ENCODE measurements at regions of chr9 and their contacts with region 1.

Region 1: GRCh38 chr9:68999393-69000105 is 14.4 kb downstream of the PRKACG start:
- DNase-seq: peak; percentile 64 to 67
- ATAC-seq: peak; percentile 96

Region 2: GRCh38 chr9:68584189-68585033 is 415.1 kb before region 1 on chr9:
- intact Hi-C with region 1: loop called in 1 of 2 experiments (anchors 5 kb)
- DNase-seq: peak; percentile 83 to 88
- ATAC-seq: peak; percentile 98

Region 3: GRCh38 chr9:68704814-68705530 is 294.6 kb before region 1 on chr9 and contains the start of gene PIP5K1B:
- intact Hi-C with region 1: loop called in 1 of 2 experiments (anchors 5 kb)
- DNase-seq: peak; percentile 87 to 91
- ATAC-seq: peak; percentile 82
- total RNA-seq, gene PIP5K1B: 83.1 to 91.6 TPM

Region 4: DNA sequence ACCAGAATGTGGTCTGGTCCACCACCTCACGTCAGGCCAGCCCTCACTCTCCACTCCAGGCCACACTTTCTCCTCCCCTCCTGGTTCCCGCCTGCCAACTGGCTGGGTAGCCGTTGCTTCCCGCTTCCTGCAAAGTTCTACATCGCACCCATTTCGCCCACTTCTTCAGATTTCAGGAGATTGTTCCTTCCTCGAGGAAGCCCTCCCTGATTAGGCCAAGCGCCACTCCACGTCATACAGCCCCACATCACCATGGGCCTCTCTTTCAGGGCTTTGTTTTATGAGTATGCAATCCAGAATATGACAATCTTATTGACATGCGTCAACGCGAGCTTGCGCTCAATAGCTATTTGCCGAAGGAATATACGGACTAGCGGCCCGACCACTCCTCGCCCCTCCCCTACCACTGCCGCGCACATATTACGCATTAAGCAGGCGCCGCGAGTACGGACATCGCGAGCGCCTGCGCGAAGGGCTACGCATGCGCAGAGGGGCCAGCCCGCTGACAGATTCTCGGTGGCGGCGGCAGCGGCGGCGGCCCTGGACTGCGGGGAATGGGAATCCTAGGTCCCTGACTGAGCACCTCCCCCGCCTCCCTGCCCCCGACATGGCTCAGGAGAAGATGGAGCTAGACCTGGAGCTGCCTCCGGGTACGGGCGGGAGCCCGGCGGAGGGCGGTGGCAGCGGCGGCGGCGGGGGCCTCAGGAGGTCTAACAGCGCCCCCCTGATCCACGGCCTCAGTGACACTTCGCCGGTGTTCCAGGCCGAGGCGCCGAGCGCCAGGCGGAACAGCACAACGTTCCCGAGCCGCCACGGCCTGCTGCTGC is 219.8 kb before region 1 on chr9:
- intact Hi-C with region 1: loop called in 1 of 2 experiments (anchors 10 kb)
- DNase-seq: peak; percentile 92 to 97
- ATAC-seq: peak; percentile 90

Region 5: GRCh38 chr9:68851657-68852056 is 147.9 kb before region 1 on chr9:
- intact Hi-C with region 1: loop called in 1 of 2 experiments (anchors 10 kb)
- DNase-seq: no peak
- ATAC-seq: no peak

Region 6: GRCh38 chr9:69056191-69056815 is 56.8 kb after region 1 on chr9:
- intact Hi-C with region 1: no loop called
- DNase-seq: no peak
- ATAC-seq: no peak